ENCODE measurements at regions of chr14 and their contacts with region 1.

Region 1: DNA sequence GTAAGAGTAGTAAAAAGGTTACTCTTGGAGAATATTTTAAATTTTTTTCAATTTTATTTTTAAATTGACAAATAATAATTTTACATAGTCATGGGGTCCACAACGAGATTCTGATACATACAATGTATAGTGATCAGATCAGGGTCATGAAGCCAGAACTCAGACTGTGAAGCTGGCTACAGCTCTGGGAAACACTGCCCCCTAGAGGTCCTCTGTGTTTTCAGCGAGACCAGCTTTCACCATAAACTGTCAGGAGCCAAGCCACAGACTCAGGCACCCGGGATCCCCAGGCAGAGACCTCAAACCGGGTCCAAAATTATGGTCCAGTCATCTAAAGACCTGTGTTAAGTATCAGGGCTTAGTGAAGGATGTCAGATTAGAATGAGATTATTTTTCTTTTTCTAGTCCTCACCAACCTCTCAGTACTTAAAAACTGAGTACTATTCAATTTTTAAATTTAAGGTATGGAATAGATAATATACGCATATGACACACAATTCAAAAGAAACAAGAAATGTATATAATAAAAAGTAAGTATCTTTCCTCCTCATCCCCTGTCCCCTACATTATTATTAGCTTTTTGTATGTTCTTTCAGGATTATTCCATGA is 397.1 kb downstream of the MDGA2 start:
- DNase-seq: peak; percentile 62
- H3K4me3 Mint-ChIP-seq: no peak overlapping the region
- H3K27ac Mint-ChIP-seq: no peak overlapping the region
- H3K4me1 Mint-ChIP-seq: peaks cover 6% of the 10 kb centered on the region
- H3K27me3 Mint-ChIP-seq: peaks cover 60% of the 10 kb centered on the region
- CTCF ChIP-seq: peak; percentile 78

Region 2: GRCh38 chr14:46581036-46581671 is 697.2 kb before region 1 on chr14:
- CTCF ChIA-PET with region 1: interaction called, 3 read pairs
- POLR2A ChIA-PET with region 1: no interaction called
- intact Hi-C with region 1: loop called (anchors 1 kb)
- DNase-seq: peak; percentile 63
- H3K4me3 Mint-ChIP-seq: no peak overlapping the region
- H3K27ac Mint-ChIP-seq: no peak overlapping the region
- H3K4me1 Mint-ChIP-seq: no peaks in the 10 kb centered on the region
- H3K27me3 Mint-ChIP-seq: peaks cover 38% of the 10 kb centered on the region
- CTCF ChIP-seq: peak; percentile 60

Region 3: DNA sequence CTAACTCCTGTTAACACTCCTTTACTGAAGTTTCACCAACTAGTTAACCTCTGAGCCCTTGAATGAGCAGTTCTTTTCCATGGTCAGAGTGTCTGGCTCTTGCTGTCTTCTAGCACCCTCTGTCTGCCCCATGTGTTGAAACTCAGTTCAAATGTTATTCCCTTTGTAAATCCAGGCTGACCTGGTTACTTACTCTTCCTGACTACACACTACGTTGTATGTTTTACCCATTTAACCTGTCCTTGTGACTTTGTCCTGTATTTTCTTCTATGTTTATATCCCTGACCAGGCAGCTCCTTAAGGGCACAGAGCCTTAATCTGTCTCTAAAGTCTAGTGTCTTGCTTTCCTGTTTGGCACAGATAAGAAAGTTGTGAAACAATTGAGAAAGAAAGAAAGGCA is 237.8 kb before region 1 on chr14:
- CTCF ChIA-PET with region 1: interaction called, 3 read pairs
- POLR2A ChIA-PET with region 1: no interaction called
- intact Hi-C with region 1: loop called (anchors 2 kb)
- DNase-seq: peak; percentile 14
- H3K4me3 Mint-ChIP-seq: no peak overlapping the region
- H3K27ac Mint-ChIP-seq: no peak overlapping the region
- H3K4me1 Mint-ChIP-seq: no peaks in the 10 kb centered on the region
- H3K27me3 Mint-ChIP-seq: peaks cover 42% of the 10 kb centered on the region
- CTCF ChIP-seq: no peak

Region 4: DNA sequence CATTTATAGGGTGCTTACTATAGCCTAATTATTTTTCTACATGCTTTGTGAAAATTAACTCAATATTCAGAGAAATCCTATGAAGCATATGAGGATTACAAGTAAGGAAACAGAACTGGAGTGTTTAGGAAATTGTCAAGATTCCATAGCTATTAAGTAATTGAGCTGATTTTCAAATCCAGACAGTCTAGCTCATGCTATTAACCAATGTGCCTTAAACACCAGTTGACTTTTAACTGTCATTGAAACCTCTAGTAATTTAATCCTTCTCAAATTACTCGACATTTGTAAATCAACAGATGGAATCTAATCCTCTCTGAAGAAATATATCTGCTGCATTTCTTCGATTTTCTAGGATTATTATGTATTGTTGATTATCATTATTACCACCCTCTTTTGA is 91.8 kb before region 1 on chr14:
- CTCF ChIA-PET with region 1: no interaction called
- POLR2A ChIA-PET with region 1: no interaction called
- intact Hi-C with region 1: no loop called
- DNase-seq: no peak
- H3K4me3 Mint-ChIP-seq: no peak overlapping the region
- H3K27ac Mint-ChIP-seq: no peak overlapping the region
- H3K4me1 Mint-ChIP-seq: no peaks in the 10 kb centered on the region
- H3K27me3 Mint-ChIP-seq: peaks cover 72% of the 10 kb centered on the region
- CTCF ChIP-seq: no peak

Region 5: DNA sequence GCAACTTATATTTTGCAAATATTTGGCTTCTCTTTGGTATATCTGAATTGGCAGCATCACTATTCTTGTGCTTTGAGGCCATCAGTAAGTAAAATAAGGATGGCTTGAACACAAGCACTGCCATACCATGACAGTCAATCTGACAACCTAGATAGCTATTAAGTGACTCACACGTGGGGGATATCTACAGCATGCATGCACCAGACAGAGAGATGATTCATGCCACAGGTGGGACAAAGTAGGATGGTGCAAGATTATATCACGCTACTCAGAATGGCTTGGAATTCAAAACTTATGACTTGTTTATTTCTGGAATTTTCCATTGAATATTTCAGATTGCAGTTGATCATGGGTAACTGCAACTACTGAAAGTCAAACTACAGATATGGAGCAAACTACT is 1072.6 kb after region 1 on chr14:
- CTCF ChIA-PET with region 1: interaction called, 11 read pairs
- POLR2A ChIA-PET with region 1: no interaction called
- intact Hi-C with region 1: no loop called
- DNase-seq: peak; percentile 57
- H3K4me3 Mint-ChIP-seq: no peak overlapping the region
- H3K27ac Mint-ChIP-seq: peak overlapping the region; percentile 43
- H3K4me1 Mint-ChIP-seq: peaks cover 8% of the 10 kb centered on the region
- H3K27me3 Mint-ChIP-seq: no peaks in the 10 kb centered on the region
- CTCF ChIP-seq: no peak